HepG2 (cell line): ENCODE measurements at regions of chr6 and their contacts with region 1.

Region 1: DNA sequence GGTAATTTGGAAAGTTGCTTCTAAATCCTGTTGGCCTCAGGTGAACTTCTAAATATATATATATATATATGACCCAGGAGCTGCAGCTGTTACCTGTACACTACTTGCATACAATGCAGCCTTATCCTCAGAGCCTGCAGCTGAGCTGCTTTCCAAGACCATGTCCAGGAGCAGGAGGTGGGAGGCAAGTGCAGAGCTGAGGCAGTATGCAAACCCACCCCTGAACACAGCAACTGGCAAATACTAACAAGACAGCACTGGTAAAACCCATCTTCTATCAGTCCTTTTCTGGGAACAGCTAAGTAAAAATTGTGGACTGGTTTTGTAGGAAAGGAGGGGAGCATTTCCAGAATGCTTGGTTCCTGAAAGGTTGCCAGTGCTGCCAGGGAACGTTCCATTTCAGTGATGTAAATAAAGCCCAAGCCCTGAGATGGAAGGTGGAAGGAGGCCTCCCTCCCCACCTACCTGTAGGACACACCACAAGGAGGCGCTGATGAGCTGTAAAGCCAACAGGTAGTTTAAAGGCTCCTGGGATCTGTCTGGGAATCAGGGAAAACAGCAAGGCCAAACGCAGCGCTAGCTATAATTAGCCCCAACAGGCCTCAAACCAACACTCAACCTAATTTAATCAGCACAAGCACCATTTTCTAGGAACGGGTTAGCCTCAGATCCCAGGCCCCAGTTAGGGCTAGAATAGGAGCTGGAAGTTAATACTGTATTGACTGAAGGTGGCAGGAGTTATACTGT is 93.8 kb upstream of the MAP7 start:
- DNase-seq: peak; percentile 65
- ATAC-seq: peak; percentile 99
- H3K4me3 ChIP-seq: no peak overlapping the region
- H3K27ac ChIP-seq: no peak overlapping the region
- H3K4me1 ChIP-seq: no peaks in the 10 kb centered on the region
- H3K27me3 ChIP-seq: no peaks in the 10 kb centered on the region; a peak in 1 of 5 replicates
- CTCF ChIP-seq: peak; percentile 83
- EP300 ChIP-seq: no peak
- POLR2A ChIP-seq: no peak
- RAD21 ChIP-seq: peak; percentile 42; the same call in 1 of the 2 replicates

Region 2: DNA sequence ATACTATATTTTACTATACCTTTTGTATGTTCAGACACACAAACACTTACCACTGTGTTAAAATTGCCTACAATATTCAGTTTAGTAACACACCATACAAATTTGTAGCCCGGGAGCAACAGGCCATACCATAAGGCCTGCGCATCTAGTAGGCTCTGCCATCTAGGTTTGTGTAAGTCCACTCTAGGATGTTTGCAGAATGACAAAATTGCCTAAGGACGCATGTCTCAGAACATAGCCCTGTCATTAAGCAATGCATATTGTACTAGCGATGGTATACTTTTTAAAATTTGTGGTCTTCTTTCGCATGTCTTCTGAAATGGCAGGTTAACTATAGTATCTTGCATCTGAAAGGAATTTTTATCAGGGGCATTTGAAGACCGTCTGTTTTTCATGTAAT is 67.2 kb before region 1 on chr6:
- CTCF ChIA-PET with region 1: no interaction called
- POLR2A ChIA-PET with region 1: no interaction called
- in situ Hi-C with region 1: no loop called
- intact Hi-C with region 1: no loop called
- DNase-seq: no peak
- ATAC-seq: no peak
- H3K4me3 ChIP-seq: no peak overlapping the region
- H3K27ac ChIP-seq: no peak overlapping the region
- H3K4me1 ChIP-seq: no peaks in the 10 kb centered on the region
- H3K27me3 ChIP-seq: no peaks in the 10 kb centered on the region
- CTCF ChIP-seq: no peak
- EP300 ChIP-seq: no peak
- POLR2A ChIP-seq: no peak
- RAD21 ChIP-seq: no peak

Region 3: GRCh38 chr6:136723780-136724179 is 79.8 kb after region 1 on chr6:
- CTCF ChIA-PET with region 1: no interaction called
- POLR2A ChIA-PET with region 1: no interaction called
- in situ Hi-C with region 1: no loop called
- intact Hi-C with region 1: no loop called
- DNase-seq: no peak
- ATAC-seq: no peak
- H3K4me3 ChIP-seq: no peak overlapping the region
- H3K27ac ChIP-seq: no peak overlapping the region
- H3K4me1 ChIP-seq: no peaks in the 10 kb centered on the region
- H3K27me3 ChIP-seq: no peaks in the 10 kb centered on the region
- CTCF ChIP-seq: no peak
- EP300 ChIP-seq: no peak
- POLR2A ChIP-seq: no peak
- RAD21 ChIP-seq: no peak

Region 4: DNA sequence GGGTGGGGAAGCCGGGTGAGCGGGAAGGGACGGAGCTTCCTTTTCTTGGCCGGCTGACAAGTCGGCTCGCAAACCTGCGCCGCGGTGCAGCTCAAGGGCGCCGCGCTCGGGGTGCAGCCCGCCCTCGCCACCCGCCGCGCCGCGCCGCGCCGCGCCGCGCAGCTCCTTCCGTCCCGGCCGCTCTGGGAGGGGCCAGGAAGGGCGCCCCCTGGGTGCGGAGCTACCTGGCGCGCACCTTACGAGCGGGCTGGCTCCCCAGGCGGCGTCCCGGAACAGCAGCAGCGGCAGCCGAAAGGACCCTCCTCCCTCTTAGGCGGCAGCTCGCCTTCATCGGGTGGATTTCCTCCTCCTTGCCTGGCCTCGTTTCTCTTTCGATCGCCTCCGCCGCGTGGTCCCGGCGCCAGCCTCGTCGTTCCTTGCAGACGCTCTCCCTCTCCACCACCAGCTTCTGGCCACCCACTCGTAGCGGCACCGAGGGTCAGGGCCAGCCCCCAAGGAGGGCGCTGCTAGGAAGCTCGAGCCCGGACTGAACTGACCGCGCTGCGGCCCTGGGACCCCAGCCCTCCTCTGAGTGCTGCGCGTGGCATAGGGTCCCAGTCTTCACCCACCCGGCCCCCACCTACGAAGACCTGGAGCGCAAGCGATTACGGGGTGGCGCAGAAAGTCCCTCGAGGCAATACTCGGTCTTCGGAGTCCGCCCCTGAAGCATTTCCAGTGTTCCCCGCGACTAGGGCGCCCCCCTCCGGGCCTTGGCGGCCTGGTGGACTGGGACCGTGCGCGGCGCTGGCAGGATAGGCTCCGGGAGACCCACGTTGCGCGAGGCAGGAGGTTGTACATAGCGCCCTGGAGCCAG is 148.6 kb after region 1 on chr6 and contains the start of gene MAP3K5:
- CTCF ChIA-PET with region 1: interaction called, 3 read pairs
- POLR2A ChIA-PET with region 1: no interaction called
- in situ Hi-C with region 1: loop called (anchors 5 kb)
- intact Hi-C with region 1: loop called (anchors 1 kb)
- DNase-seq: peak; percentile 33
- ATAC-seq: peak; percentile 92
- H3K4me3 ChIP-seq: peak within 1 kb of the TSS; percentile 39 to 67 (median 41)
- H3K27ac ChIP-seq: no peak within 1 kb of the TSS
- H3K4me1 ChIP-seq: peaks cover 18% of the 10 kb centered on the region
- H3K27me3 ChIP-seq: peaks cover 1 to 55% of the 10 kb centered on the region in 2 experiments; a peak in 4 of 5 replicates
- CTCF ChIP-seq: peak; percentile 68
- EP300 ChIP-seq: no peak
- POLR2A ChIP-seq: no peak
- RAD21 ChIP-seq: peak; percentile 70
- total RNA-seq, gene MAP3K5: not detected in 2 replicates

Region 5: GRCh38 chr6:136846046-136846445 is 202.0 kb after region 1 on chr6:
- CTCF ChIA-PET with region 1: interaction called, 3 read pairs
- POLR2A ChIA-PET with region 1: no interaction called
- in situ Hi-C with region 1: no loop called
- intact Hi-C with region 1: loop called (anchors 5 kb)
- DNase-seq: peak; percentile 57
- ATAC-seq: peak; percentile 55; the same call in 2 of the 3 replicates
- H3K4me3 ChIP-seq: no peak overlapping the region
- H3K27ac ChIP-seq: no peak overlapping the region
- H3K4me1 ChIP-seq: no peaks in the 10 kb centered on the region
- H3K27me3 ChIP-seq: no peaks in the 10 kb centered on the region
- CTCF ChIP-seq: peak; percentile 66
- EP300 ChIP-seq: no peak
- POLR2A ChIP-seq: no peak
- RAD21 ChIP-seq: no peak

Region 6: GRCh38 chr6:136921936-136922684 is 278.1 kb after region 1 on chr6 and contains the start of gene SLC35D3:
- CTCF ChIA-PET with region 1: interaction called, 4 read pairs
- POLR2A ChIA-PET with region 1: no interaction called
- in situ Hi-C with region 1: loop called (anchors 25 kb)
- intact Hi-C with region 1: loop called (anchors 1 kb)
- DNase-seq: no peak
- ATAC-seq: peak; percentile 30
- H3K4me3 ChIP-seq: no peak within 1 kb of the TSS
- H3K27ac ChIP-seq: no peak within 1 kb of the TSS
- H3K4me1 ChIP-seq: no peaks in the 10 kb centered on the region
- H3K27me3 ChIP-seq: peaks cover 8 to 55% of the 10 kb centered on the region in 2 experiments
- CTCF ChIP-seq: no peak
- EP300 ChIP-seq: no peak
- POLR2A ChIP-seq: no peak
- RAD21 ChIP-seq: no peak
- total RNA-seq, gene SLC35D3: not detected in 2 replicates

Region 7: GRCh38 chr6:136927292-136927691 is 283.3 kb after region 1 on chr6:
- CTCF ChIA-PET with region 1: interaction called, 4 read pairs
- POLR2A ChIA-PET with region 1: no interaction called
- in situ Hi-C with region 1: loop called (anchors 25 kb)
- intact Hi-C with region 1: loop called (anchors 1 kb)
- DNase-seq: peak; percentile 10
- ATAC-seq: peak; percentile 79
- H3K4me3 ChIP-seq: no peak overlapping the region
- H3K27ac ChIP-seq: no peak overlapping the region
- H3K4me1 ChIP-seq: no peaks in the 10 kb centered on the region
- H3K27me3 ChIP-seq: peaks cover 3 to 29% of the 10 kb centered on the region in 2 experiments; a peak in 4 of 5 replicates
- CTCF ChIP-seq: peak; percentile 62
- EP300 ChIP-seq: no peak
- POLR2A ChIP-seq: no peak
- RAD21 ChIP-seq: 0 out of 2 replicates have a peak, but pooled peaks have one; percentile 30